ENCODE measurements at regions of chr20 and their contacts with region 1.

Region 1: GRCh38 chr20:49541733-49542513 is 26.0 kb downstream of the PTGIS start:
- DNase-seq: peak; percentile 88
- H3K27ac ChIP-seq: no peak overlapping the region
- CTCF ChIP-seq: peak; percentile 96

Region 2: GRCh38 chr20:49508435-49509199 is 33.3 kb before region 1 on chr20:
- CTCF ChIA-PET with region 1: interaction called, 10 read pairs
- POLR2A ChIA-PET with region 1: no interaction called
- DNase-seq: peak; percentile 63
- H3K27ac ChIP-seq: peak overlapping the region; percentile 66
- CTCF ChIP-seq: no peak; the same call in 1 of the 2 replicates

Region 3: GRCh38 chr20:49519777-49520359 is 22.1 kb before region 1 on chr20:
- CTCF ChIA-PET with region 1: interaction called, 10 read pairs
- POLR2A ChIA-PET with region 1: no interaction called
- DNase-seq: no peak
- H3K27ac ChIP-seq: no peak overlapping the region
- CTCF ChIP-seq: no peak

Region 4: GRCh38 chr20:49562311-49563014 is 20.5 kb after region 1 on chr20:
- CTCF ChIA-PET with region 1: interaction called, 18 read pairs
- POLR2A ChIA-PET with region 1: no interaction called
- DNase-seq: peak; percentile 68
- H3K27ac ChIP-seq: no peak overlapping the region
- CTCF ChIP-seq: no peak

Region 5: DNA sequence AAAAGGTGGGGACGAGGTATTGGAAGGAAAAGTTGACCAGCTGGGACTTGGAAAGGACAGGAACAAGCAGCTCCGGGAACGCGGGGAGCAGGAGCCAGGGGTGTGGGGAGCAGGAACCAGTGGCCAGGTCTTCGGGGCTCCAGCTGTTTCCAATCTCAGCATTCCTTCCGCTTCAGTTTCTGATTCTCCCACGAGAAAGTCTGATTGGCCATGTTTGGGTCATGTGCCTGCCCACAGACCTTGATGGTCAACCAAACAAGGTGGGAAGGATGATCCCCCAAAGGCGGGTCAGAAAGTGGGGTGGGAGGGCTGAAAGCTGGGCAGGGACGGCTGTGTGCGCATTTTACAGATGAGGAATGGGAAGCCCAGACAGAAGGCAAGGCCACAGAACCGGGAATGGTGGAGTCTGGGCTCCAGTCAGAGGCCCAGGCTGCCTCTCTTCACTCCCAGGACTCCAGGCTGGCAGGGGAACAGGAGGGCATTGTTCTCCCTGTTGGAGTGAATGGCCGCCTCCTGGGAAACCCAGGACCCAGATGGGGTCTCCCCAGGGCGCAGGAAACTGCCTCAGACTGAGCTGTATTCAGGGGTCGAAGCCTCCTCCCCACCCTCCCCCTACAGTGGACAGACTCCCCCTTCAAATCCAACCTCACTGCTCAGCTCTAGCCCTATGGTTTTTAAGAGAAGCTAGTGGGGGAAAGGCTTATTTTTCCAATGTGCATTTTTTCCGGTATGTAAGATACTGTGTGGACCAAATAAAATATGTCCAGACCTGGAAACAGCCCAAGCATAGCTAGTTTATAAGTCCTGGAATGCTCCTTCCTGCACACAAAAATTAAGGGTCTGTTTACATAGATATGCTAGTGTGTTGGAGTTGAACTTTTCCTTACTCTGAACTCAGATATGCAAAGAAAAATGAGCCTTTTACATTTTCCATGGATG is 38.2 kb after region 1 on chr20:
- CTCF ChIA-PET with region 1: interaction called, 12 read pairs
- POLR2A ChIA-PET with region 1: no interaction called
- DNase-seq: no peak
- H3K27ac ChIP-seq: no peak overlapping the region
- CTCF ChIP-seq: no peak

Region 6: DNA sequence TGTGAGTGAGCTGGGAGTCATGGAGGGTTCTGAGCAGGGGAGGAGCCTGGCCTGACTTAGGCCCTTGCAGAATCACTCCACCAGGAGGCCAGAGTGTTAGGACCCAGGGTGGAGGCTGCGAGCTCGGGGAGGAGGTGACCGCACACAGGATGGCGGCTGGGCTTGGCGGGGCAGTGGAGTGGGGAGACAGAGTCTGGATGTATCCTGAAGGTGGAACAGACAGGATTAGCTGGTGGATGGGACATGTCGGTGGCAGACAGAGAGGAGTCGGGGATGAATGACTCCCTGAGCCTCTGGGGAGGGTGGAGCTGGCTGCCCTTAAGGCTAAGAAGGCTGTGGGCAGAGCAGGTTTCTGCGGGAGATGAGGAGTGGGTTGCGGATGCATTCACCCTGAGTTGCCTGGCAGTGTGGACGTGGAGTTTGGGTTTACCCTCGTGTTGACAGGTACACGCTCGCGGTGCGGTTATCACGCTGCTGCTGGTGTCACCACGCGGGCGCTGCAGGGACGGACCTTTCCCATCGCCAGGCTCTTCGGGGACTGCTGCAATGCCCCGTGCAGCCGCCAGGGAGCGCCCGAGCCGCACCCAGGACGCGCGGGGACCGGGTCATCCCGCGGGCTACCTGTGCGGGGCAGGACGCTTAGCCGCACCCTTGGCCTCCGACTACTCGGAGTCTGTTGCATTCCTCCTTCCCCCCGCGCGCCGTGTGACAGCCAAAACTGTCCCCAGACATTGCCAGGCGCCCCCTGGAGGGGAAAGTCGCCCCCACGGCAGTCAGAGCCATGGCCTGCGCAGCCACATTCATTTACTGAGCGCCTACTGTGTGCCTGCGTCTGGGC is 69.0 kb after region 1 on chr20:
- CTCF ChIA-PET with region 1: interaction called, 130 read pairs
- POLR2A ChIA-PET with region 1: no interaction called
- DNase-seq: peak; percentile 93
- H3K27ac ChIP-seq: no peak overlapping the region
- CTCF ChIP-seq: peak; percentile 100

Region 7: GRCh38 chr20:49724408-49725223 is 182.7 kb after region 1 on chr20:
- CTCF ChIA-PET with region 1: no interaction called
- POLR2A ChIA-PET with region 1: no interaction called
- DNase-seq: no peak
- H3K27ac ChIP-seq: no peak overlapping the region
- CTCF ChIP-seq: no peak

Measured in RWPE1 (cell line).